ENCODE measurements at regions of chr13 and their contacts with region 1.

Region 1: GRCh38 chr13:27406178-27406939 is 18.1 kb upstream of the GTF3A start:
- DNase-seq: peak in 1 of 2 donors; percentile 78
- ATAC-seq: peak in 2 of 3 donors; percentile 60
- H3K4me3 ChIP-seq: no peak overlapping the region
- H3K4me3 Mint-ChIP-seq: no peak overlapping the region
- H3K27ac ChIP-seq: no peak overlapping the region
- H3K27ac Mint-ChIP-seq: no peak overlapping the region
- H3K4me1 ChIP-seq: peaks cover 5% of the 10 kb centered on the region
- H3K4me1 Mint-ChIP-seq: peaks cover 0 to 6% of the 10 kb centered on the region in 2 donors
- H3K27me3 ChIP-seq: no peaks in the 10 kb centered on the region
- H3K27me3 Mint-ChIP-seq: peaks cover 3 to 29% of the 10 kb centered on the region in 2 donors
- CTCF ChIP-seq: peak; percentile 59

Region 2: GRCh38 chr13:27449936-27450828 is 43.8 kb after region 1 on chr13 and contains the start of gene MTIF3:
- intact Hi-C with region 1: loop called (anchors 10 kb)
- DNase-seq: peak; percentile 87 to 99
- ATAC-seq: peak; percentile 81 to 93 (median 83)
- H3K4me3 ChIP-seq: peak within 1 kb of the TSS; percentile 84
- H3K4me3 Mint-ChIP-seq: peak within 1 kb of the TSS; percentile 95
- H3K27ac ChIP-seq: peak within 1 kb of the TSS; percentile 94
- H3K27ac Mint-ChIP-seq: peak within 1 kb of the TSS; percentile 97 to 98
- H3K4me1 ChIP-seq: peaks cover 20% of the 10 kb centered on the region
- H3K4me1 Mint-ChIP-seq: peaks cover 44 to 49% of the 10 kb centered on the region in 2 donors
- H3K27me3 ChIP-seq: no peaks in the 10 kb centered on the region
- H3K27me3 Mint-ChIP-seq: no peaks in the 10 kb centered on the region
- CTCF ChIP-seq: no peak
- total RNA-seq, gene MTIF3: 30.2 to 56.6 (median 36.8) TPM

Measured in natural killer cell (primary cell).